Activated T-helper 1 cell treated with anti-CD3 and anti-CD28 coated beads, Interleukin-12 subunit alpha, Interleukin-12 subunit beta, Interleukin-2, Interleukin-4 antibody, amounts not matched to agents 30 ng/mL and 10 ng/mL and 1 ng/mL, durations not matched to agents 14 hours and 24 hours and 36 hours (primary cell): ENCODE measurements at regions of chr5 and their contacts with region 1.

Region 1: DNA sequence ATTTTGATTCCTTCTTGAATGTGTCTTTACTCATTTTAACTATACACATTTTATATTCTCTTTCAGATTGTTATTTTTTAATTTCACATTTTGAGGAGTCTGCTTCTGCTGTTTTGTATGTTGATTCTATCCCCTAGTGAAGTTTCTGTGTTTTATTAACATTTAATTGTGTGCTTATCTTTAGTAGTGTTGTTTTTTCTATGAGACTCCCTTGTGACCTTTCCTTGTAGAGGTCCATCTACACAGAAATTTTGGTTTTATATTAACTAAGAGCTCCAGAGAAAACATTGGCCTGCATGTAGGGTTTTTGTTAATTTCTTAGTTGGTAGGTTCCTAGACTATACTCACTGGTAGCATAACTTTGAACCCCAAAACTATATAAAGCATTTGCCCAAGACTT is 35.4 kb upstream of the IL13 start:
- DNase-seq: no peak
- H3K4me3 Mint-ChIP-seq: no peak overlapping the region
- H3K27ac Mint-ChIP-seq: peak overlapping the region; percentile 16
- H3K4me1 Mint-ChIP-seq: peaks cover 24% of the 10 kb centered on the region
- H3K27me3 Mint-ChIP-seq: no peaks in the 10 kb centered on the region

Region 2: DNA sequence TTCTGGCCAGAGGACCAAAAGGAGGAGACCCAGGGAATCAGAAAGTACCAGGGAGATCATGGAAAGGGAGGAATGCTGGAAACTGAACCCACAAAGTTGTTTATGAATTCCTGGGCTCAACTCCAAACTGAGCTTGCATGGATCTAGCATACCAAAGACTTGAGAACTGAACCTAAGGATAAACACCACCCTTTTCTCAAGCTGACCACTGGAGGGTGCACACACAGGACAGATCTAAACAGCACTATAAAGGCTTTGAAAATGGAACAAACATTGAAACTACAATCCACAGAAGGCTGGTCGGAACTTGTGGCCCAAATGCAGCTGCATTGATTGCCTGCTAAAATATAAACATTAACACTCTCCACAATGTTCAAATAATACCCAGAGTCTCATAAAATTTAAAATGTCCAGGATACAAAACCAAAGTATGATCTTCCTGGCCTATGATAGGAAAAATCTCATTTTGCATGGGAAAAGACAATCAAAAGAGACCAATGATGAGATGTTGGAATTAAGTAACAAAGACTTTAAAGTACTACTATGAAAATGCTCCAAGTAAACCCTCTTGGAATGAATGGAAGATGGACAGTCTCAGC is 116.4 kb before region 1 on chr5:
- intact Hi-C with region 1: no loop called
- DNase-seq: no peak
- H3K4me3 Mint-ChIP-seq: no peak overlapping the region
- H3K27ac Mint-ChIP-seq: no peak overlapping the region
- H3K4me1 Mint-ChIP-seq: peaks cover 54% of the 10 kb centered on the region
- H3K27me3 Mint-ChIP-seq: peaks cover 4% of the 10 kb centered on the region

Region 3: GRCh38 chr5:132576123-132576522 is 46.5 kb before region 1 on chr5:
- intact Hi-C with region 1: loop called (anchors 5 kb)
- DNase-seq: no peak
- H3K4me3 Mint-ChIP-seq: no peak overlapping the region
- H3K27ac Mint-ChIP-seq: peak overlapping the region; percentile 53
- H3K4me1 Mint-ChIP-seq: peaks cover 13% of the 10 kb centered on the region
- H3K27me3 Mint-ChIP-seq: no peaks in the 10 kb centered on the region